ENCODE measurements at regions of chr17 and their contacts with region 1.

Region 1: DNA sequence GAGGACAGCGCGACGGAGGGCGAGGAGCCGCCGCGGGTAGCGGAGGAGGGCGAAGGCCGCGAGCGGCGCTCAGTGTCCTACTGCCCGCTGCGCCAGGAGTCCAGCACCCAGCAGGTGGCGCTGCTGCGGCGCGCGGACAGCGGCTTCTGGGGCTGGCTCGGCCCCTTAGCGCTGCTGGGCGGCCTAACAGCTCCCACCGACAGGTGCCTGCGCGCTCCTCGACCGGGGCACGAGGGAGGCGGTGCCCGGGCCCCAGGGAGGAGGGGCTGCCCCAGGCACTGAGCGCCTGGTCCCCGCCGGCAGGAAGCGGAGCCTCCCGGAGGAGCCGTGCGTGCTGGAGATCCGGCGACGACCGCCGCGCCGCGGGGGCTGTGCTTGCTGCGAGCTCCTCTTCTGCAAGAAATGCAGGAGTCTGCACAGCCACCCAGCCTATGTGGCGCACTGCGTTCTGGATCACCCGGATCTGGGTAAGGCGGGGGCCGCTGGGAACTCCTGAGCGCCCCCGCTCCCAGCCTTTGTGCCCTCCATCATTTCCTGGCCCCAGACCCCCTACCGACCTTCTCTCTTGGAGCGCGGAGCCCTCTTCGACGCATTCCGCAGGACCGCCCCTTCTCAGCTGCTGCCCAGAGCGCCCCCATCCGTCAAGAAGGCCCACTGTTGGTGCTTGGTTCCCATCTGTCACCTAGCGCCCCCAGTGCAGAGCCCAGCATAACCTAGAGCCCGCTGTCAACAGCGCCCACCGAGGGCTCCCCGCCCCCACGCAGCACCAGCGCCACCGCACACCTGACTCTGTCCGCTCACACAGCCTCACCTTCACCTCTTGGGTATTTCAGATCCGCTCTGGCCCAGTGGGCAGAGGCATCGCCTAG is 3.7 kb downstream of the C17orf50 start:
- DNase-seq: peak; percentile 93
- H3K4me3 ChIP-seq: peak overlapping the region; percentile 7 to 54 (median 40)
- H3K27ac ChIP-seq: peak overlapping the region; percentile 35 to 78 (median 66)
- H3K4me1 ChIP-seq: peaks cover 9 to 23% (median 19%) of the 10 kb centered on the region in 4 donors
- H3K27me3 ChIP-seq: no peaks in the 10 kb centered on the region
- CTCF ChIP-seq: peak; percentile 92 to 99 (median 97)
- EP300 ChIP-seq: no peak
- POLR2A ChIP-seq: no peak

Region 2: DNA sequence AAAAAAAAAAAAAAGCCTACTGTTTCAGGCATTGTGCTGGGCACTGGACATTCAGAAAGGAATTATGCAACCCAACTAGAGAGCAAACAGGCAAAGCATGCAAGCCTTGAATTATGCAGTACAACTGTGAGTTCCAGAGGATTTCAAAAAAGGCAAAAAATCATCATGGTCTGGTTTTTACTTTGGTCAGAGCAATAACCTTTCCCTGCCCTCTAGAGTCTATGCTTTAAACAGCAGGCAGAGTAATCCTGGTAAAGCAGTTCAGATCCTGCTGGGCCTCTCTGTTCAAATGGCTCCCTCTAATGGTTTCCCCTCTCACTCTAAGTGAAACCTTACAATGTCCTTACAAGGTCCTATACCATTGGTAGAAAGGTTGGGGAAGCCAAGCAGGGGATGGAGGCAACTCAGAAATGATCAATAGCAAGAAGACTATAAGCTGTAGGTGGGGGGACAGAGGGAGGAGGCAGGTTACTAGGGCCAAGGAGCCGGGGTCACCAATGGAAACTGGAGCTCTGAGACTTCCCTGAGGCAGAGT is 40.4 kb after region 1 on chr17:
- in situ Hi-C with region 1: loop called in 2 of 4 experiments (anchors 5 kb)
- intact Hi-C with region 1: loop called (anchors 1 kb)
- DNase-seq: peak; percentile 50
- H3K4me3 ChIP-seq: no peak overlapping the region
- H3K27ac ChIP-seq: peak overlapping the region in 2 of 4 donors; percentile 33 to 42
- H3K4me1 ChIP-seq: peaks cover 25 to 50% (median 35%) of the 10 kb centered on the region in 4 donors
- H3K27me3 ChIP-seq: no peaks in the 10 kb centered on the region
- CTCF ChIP-seq: peak; percentile 78 to 97 (median 84)
- EP300 ChIP-seq: no peak
- POLR2A ChIP-seq: no peak

Region 3: DNA sequence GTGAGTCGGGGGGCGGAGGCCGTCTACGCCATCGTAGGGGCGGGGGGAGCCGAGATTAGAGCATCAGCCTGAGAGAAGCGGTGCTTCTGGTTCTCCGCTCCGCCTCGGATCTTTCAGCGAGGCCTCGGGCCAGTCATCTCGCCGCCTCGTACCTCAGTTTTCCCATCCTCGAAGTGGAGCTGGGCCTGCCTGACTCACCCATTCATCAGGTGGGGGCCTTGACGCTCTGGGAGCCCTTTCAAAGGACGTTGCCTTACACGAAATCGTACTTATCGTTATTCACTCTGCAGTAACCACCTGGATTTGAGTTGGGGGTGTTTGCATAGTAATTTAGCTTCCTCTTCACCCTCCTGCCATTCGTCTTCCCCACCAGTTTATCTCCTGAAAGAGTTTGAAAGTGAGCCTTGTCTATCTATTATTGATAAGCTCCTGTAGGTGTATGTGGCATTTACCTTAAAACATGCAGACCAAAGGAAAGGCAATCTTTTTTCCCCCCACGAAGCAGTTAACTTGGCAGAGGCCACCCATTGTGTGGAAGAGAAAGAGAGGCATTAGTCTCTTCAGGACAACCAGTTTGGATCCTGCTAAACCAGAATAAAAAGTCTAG is 45.6 kb after region 1 on chr17:
- in situ Hi-C with region 1: loop called in 1 of 4 experiments (anchors 10 kb)
- intact Hi-C with region 1: no loop called
- DNase-seq: no peak
- H3K4me3 ChIP-seq: peak overlapping the region; percentile 69 to 82 (median 72)
- H3K27ac ChIP-seq: peak overlapping the region; percentile 92 to 96 (median 95)
- H3K4me1 ChIP-seq: peaks cover 10 to 49% (median 25%) of the 10 kb centered on the region in 4 donors
- H3K27me3 ChIP-seq: no peaks in the 10 kb centered on the region
- CTCF ChIP-seq: no peak
- EP300 ChIP-seq: no peak
- POLR2A ChIP-seq: no peak